Activated B cell treated with CpG ODN at 0.5 μM for 24 hours (primary cell): ENCODE measurements at regions of chr3 and their contacts with region 1.

Region 1: GRCh38 chr3:23442598-23443383 is 239.7 kb downstream of the UBE2E2 start:
- DNase-seq: no peak
- ATAC-seq: peak; percentile 88
- H3K4me3 Mint-ChIP-seq: peak overlapping the region; percentile 30
- H3K27ac Mint-ChIP-seq: no peak overlapping the region
- H3K4me1 Mint-ChIP-seq: peaks cover 71% of the 10 kb centered on the region
- H3K27me3 Mint-ChIP-seq: no peaks in the 10 kb centered on the region
- CTCF ChIP-seq: no peak

Region 2: GRCh38 chr3:23136048-23136447 is 306.7 kb before region 1 on chr3:
- CTCF ChIA-PET with region 1: no interaction called
- POLR2A ChIA-PET with region 1: no interaction called
- intact Hi-C with region 1: no loop called
- DNase-seq: no peak
- ATAC-seq: no peak
- H3K4me3 Mint-ChIP-seq: no peak overlapping the region
- H3K27ac Mint-ChIP-seq: no peak overlapping the region
- H3K4me1 Mint-ChIP-seq: peaks cover 3% of the 10 kb centered on the region
- H3K27me3 Mint-ChIP-seq: no peaks in the 10 kb centered on the region
- CTCF ChIP-seq: no peak

Region 3: DNA sequence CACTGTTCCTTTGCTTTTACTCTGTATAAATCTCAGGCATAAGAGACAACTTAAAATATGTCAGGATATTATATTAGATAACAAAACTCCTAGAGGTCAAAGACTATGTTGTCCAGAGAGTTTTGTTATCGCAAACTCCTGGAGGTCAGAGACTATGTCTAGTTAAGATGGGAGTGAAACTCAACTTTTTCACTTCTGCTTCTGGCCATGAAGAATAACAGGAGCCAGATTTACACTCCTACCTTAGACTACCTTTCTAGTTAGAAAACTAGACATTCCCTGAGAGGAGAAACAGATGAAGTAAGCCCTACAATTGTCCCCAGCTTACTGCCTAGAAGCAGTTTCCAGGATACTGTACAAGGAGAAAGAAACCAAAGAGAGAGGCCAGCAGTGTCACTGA is 107.6 kb after region 1 on chr3:
- CTCF ChIA-PET with region 1: no interaction called
- POLR2A ChIA-PET with region 1: no interaction called
- intact Hi-C with region 1: no loop called
- DNase-seq: no peak
- ATAC-seq: no peak
- H3K4me3 Mint-ChIP-seq: no peak overlapping the region
- H3K27ac Mint-ChIP-seq: no peak overlapping the region
- H3K4me1 Mint-ChIP-seq: peaks cover 12% of the 10 kb centered on the region
- H3K27me3 Mint-ChIP-seq: no peaks in the 10 kb centered on the region
- CTCF ChIP-seq: no peak

Region 4: DNA sequence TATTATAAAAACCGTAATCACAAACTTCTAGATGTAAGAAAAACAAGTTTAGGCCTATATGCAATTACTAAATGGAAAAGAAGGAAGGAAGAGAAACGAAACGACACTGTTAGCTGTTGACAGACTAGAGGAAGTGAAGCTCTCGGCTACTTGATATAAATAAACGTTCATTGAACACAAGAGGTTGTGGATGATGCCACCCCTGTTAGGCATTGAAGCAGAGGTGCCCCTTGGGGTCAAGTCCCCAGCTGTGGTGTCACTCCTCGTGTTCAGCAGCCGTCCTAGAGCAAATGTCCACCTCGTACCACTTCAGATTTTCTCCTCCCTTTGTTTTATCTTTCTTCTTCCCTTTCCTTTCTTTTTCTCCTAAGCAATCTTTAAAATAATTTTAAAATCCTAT is 216.5 kb after region 1 on chr3:
- CTCF ChIA-PET with region 1: no interaction called
- POLR2A ChIA-PET with region 1: no interaction called
- intact Hi-C with region 1: no loop called
- DNase-seq: no peak
- ATAC-seq: peak; percentile 87
- H3K4me3 Mint-ChIP-seq: peak overlapping the region; percentile 63
- H3K27ac Mint-ChIP-seq: peak overlapping the region; percentile 82
- H3K4me1 Mint-ChIP-seq: peaks cover 78% of the 10 kb centered on the region
- H3K27me3 Mint-ChIP-seq: no peaks in the 10 kb centered on the region
- CTCF ChIP-seq: no peak

Region 5: DNA sequence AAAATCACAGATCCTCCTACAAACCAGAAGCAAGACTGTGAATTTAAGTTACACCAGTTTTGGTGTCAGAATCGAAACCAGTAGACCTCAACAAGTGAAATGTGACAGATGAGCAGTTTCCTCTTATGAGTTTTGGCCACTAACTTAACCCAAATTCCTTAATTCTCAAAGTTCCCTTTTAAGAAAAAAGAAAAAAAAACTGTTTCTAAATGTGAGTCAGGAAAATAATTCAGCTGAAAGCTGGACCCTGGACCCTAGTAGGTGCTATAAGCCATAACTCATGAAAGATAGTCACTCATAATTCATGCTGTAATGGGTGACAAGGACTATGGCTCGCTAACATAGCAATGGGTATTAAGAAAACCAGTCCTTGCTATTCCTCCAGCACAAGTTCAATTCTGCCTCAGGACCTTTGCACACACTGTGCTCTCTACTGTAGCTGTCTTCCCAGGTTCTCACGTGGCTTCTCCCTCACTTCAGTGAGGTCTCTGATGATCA is 1060.9 kb after region 1 on chr3:
- CTCF ChIA-PET with region 1: no interaction called
- POLR2A ChIA-PET with region 1: no interaction called
- intact Hi-C with region 1: loop called (anchors 5 kb)
- DNase-seq: no peak
- ATAC-seq: peak; percentile 54
- H3K4me3 Mint-ChIP-seq: no peak overlapping the region
- H3K27ac Mint-ChIP-seq: peak overlapping the region; percentile 46
- H3K4me1 Mint-ChIP-seq: peaks cover 60% of the 10 kb centered on the region
- H3K27me3 Mint-ChIP-seq: peaks cover 2% of the 10 kb centered on the region
- CTCF ChIP-seq: no peak